ENCODE measurements at regions of chr11 and their contacts with region 1.

Region 1: GRCh38 chr11:133134314-133135173 is 397.8 kb downstream of the OPCML start:
- DNase-seq: peak in 4 of 9 experiments; percentile 7 to 38 (median 26)
- ATAC-seq: no peak
- H3K4me3 ChIP-seq: no peak overlapping the region
- H3K4me3 Mint-ChIP-seq: no peak overlapping the region
- H3K27ac ChIP-seq: no peak overlapping the region
- H3K27ac Mint-ChIP-seq: no peak overlapping the region
- H3K4me1 ChIP-seq: no peaks in the 10 kb centered on the region
- H3K4me1 Mint-ChIP-seq: no peaks in the 10 kb centered on the region
- H3K27me3 ChIP-seq: no peaks in the 10 kb centered on the region
- H3K27me3 Mint-ChIP-seq: peaks cover 6% of the 10 kb centered on the region
- CTCF ChIP-seq: peak; percentile 49

Region 2: GRCh38 chr11:132858223-132858622 is 276.3 kb before region 1 on chr11:
- CTCF ChIA-PET with region 1: no interaction called
- POLR2A ChIA-PET with region 1: no interaction called
- intact Hi-C with region 1: no loop called
- DNase-seq: no peak
- ATAC-seq: no peak
- H3K4me3 ChIP-seq: no peak overlapping the region
- H3K4me3 Mint-ChIP-seq: no peak overlapping the region
- H3K27ac ChIP-seq: no peak overlapping the region
- H3K27ac Mint-ChIP-seq: no peak overlapping the region
- H3K4me1 ChIP-seq: no peaks in the 10 kb centered on the region
- H3K4me1 Mint-ChIP-seq: no peaks in the 10 kb centered on the region
- H3K27me3 ChIP-seq: no peaks in the 10 kb centered on the region
- H3K27me3 Mint-ChIP-seq: no peaks in the 10 kb centered on the region
- CTCF ChIP-seq: no peak

Region 3: DNA sequence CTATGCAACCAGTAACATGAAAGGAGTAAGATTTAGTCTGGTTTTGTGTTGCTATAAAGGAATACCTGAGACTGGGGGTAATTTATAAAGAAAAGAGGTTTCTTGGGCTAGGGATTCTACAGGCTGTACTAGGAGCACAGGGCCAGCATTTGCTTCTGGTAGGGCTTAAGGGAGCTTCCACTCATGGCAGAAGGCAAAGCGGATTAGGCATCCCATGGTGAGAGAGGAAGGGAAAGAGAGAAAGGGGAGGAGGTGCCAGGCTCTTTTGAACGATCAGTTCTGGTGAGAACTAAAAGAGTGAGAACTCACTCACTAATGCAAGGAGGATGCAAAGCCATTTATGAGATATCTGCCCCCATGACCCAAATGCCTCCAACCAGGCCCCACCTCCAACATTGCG is 114.5 kb after region 1 on chr11:
- CTCF ChIA-PET with region 1: no interaction called
- POLR2A ChIA-PET with region 1: no interaction called
- intact Hi-C with region 1: no loop called
- DNase-seq: no peak
- ATAC-seq: no peak
- H3K4me3 ChIP-seq: no peak overlapping the region
- H3K4me3 Mint-ChIP-seq: no peak overlapping the region
- H3K27ac ChIP-seq: no peak overlapping the region
- H3K27ac Mint-ChIP-seq: no peak overlapping the region
- H3K4me1 ChIP-seq: no peaks in the 10 kb centered on the region
- H3K4me1 Mint-ChIP-seq: no peaks in the 10 kb centered on the region
- H3K27me3 ChIP-seq: no peaks in the 10 kb centered on the region
- H3K27me3 Mint-ChIP-seq: no peaks in the 10 kb centered on the region
- CTCF ChIP-seq: no peak

Region 4: GRCh38 chr11:133834682-133835592 is 700.4 kb after region 1 on chr11:
- CTCF ChIA-PET with region 1: interaction called, 14 read pairs
- POLR2A ChIA-PET with region 1: no interaction called
- intact Hi-C with region 1: no loop called
- DNase-seq: peak in 5 of 9 experiments; percentile 6 to 47 (median 30)
- ATAC-seq: no peak
- H3K4me3 ChIP-seq: no peak overlapping the region
- H3K4me3 Mint-ChIP-seq: no peak overlapping the region
- H3K27ac ChIP-seq: no peak overlapping the region
- H3K27ac Mint-ChIP-seq: no peak overlapping the region
- H3K4me1 ChIP-seq: no peaks in the 10 kb centered on the region
- H3K4me1 Mint-ChIP-seq: peaks cover 3% of the 10 kb centered on the region
- H3K27me3 ChIP-seq: no peaks in the 10 kb centered on the region
- H3K27me3 Mint-ChIP-seq: peaks cover 11% of the 10 kb centered on the region
- CTCF ChIP-seq: peak; percentile 35